ENCODE measurements at regions of chr1 and their contacts with region 1.

Region 1: GRCh38 chr1:29181413-29182225 is at the start of gene SRSF4:
- DNase-seq: peak; percentile 99
- H3K4me3 ChIP-seq: peak within 1 kb of the TSS; percentile 92
- H3K27ac ChIP-seq: peak within 1 kb of the TSS; percentile 82
- H3K4me1 ChIP-seq: peaks cover 25% of the 10 kb centered on the region
- CTCF ChIP-seq: peak; percentile 79
- total RNA-seq, gene SRSF4: 52.8 and 68.6 TPM in 2 replicates

Region 2: DNA sequence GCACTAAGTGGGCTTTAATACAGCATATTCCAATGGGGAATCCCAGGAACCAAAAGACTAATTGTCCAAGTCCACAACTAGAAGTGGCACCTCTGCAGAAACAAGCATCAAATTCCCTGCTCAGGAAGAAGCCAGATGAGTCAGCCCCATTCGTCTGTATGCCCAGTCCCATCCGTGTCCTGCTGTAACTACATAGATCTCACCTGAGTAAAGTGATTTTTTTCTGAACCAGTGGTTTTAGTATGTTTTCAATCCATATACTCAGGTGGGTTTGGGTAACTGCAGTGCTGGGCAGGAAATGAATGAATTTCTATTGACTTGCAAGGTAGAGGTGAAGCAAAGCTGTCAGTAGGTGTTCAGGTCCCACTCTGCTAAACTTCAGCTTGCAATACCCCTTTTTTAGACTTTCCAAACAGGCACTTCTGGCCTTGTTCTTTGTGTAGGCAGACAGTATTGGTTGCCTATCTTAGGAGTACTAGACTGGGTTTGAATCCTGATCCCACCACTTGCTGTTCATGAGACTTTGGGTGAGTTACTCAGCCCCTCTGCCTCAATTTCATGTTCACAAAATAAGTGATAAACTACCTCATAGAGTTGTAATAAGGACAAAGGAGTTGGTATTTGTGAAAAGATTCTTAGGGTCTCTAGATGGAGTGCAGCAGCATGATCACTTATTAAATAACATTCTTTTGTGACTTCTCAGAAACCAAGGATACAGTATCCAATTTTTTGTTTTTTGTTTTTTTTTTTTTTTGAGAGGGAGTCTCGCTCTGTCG is 670.8 kb before region 1 on chr1:
- CTCF ChIA-PET with region 1: no interaction called
- POLR2A ChIA-PET with region 1: no interaction called
- intact Hi-C with region 1: loop called (anchors 5 kb)
- DNase-seq: peak; percentile 49
- H3K4me3 ChIP-seq: peak overlapping the region; percentile 85
- H3K27ac ChIP-seq: peak overlapping the region; percentile 94
- H3K4me1 ChIP-seq: peaks cover 36% of the 10 kb centered on the region
- CTCF ChIP-seq: no peak

Region 3: GRCh38 chr1:29171089-29171488 is 10.5 kb before region 1 on chr1:
- CTCF ChIA-PET with region 1: no interaction called
- POLR2A ChIA-PET with region 1: interaction called, 11 read pairs
- intact Hi-C with region 1: no loop called
- DNase-seq: no peak
- H3K4me3 ChIP-seq: no peak overlapping the region
- H3K27ac ChIP-seq: no peak overlapping the region
- H3K4me1 ChIP-seq: peaks cover 9% of the 10 kb centered on the region
- CTCF ChIP-seq: no peak

Measured in OCI-LY7 (cell line).